ENCODE measurements at regions of chr21 and their contacts with region 1.

Region 1: GRCh38 chr21:25607151-25608043 is at the start of gene MRPL39:
- DNase-seq: peak; percentile 63 to 88 (median 80)
- ATAC-seq: peak; percentile 87 to 92 (median 90)
- H3K4me3 ChIP-seq: peak within 1 kb of the TSS; percentile 82 to 95
- H3K4me3 Mint-ChIP-seq: peak within 1 kb of the TSS; percentile 96 to 99 (median 99)
- H3K27ac ChIP-seq: peak within 1 kb of the TSS; percentile 63
- H3K27ac Mint-ChIP-seq: peak within 1 kb of the TSS; percentile 96 to 98
- H3K4me1 ChIP-seq: peaks cover 12 to 23% of the 10 kb centered on the region in 2 experiments
- H3K4me1 Mint-ChIP-seq: peaks cover 43 to 45% (median 43%) of the 10 kb centered on the region in 3 donors
- H3K27me3 ChIP-seq: no peaks in the 10 kb centered on the region
- H3K27me3 Mint-ChIP-seq: no peaks in the 10 kb centered on the region
- total RNA-seq, gene MRPL39: 10.6 to 18.2 (median 14.8) TPM

Region 2: GRCh38 chr21:25360593-25360992 is 246.8 kb before region 1 on chr21:
- CTCF ChIA-PET with region 1: no interaction called
- POLR2A ChIA-PET with region 1: no interaction called
- DNase-seq: no peak
- ATAC-seq: no peak
- H3K4me3 ChIP-seq: no peak overlapping the region
- H3K4me3 Mint-ChIP-seq: no peak overlapping the region
- H3K27ac ChIP-seq: no peak overlapping the region
- H3K27ac Mint-ChIP-seq: no peak overlapping the region
- H3K4me1 ChIP-seq: no peaks in the 10 kb centered on the region
- H3K4me1 Mint-ChIP-seq: no peaks in the 10 kb centered on the region
- H3K27me3 ChIP-seq: peaks cover 0 to 5% of the 10 kb centered on the region in 2 experiments
- H3K27me3 Mint-ChIP-seq: peaks cover 0 to 6% of the 10 kb centered on the region in 2 donors

Region 3: GRCh38 chr21:25563361-25564116 is 43.9 kb before region 1 on chr21:
- CTCF ChIA-PET with region 1: interaction called in 1 of 2 experiments, 4 read pairs
- POLR2A ChIA-PET with region 1: interaction called in 1 of 2 experiments, 15 read pairs
- DNase-seq: peak in 4 of 35 experiments; percentile 2 to 57 (median 18)
- ATAC-seq: peak; percentile 4 to 24 (median 11)
- H3K4me3 ChIP-seq: peak overlapping the region; percentile 7 to 62
- H3K4me3 Mint-ChIP-seq: peak overlapping the region; percentile 85 to 93 (median 91)
- H3K27ac ChIP-seq: peak overlapping the region; percentile 73
- H3K27ac Mint-ChIP-seq: peak overlapping the region; percentile 79 to 84
- H3K4me1 ChIP-seq: peaks cover 20 to 43% of the 10 kb centered on the region in 2 experiments
- H3K4me1 Mint-ChIP-seq: peaks cover 63 to 81% (median 71%) of the 10 kb centered on the region in 3 donors
- H3K27me3 ChIP-seq: no peaks in the 10 kb centered on the region
- H3K27me3 Mint-ChIP-seq: no peaks in the 10 kb centered on the region

Region 4: DNA sequence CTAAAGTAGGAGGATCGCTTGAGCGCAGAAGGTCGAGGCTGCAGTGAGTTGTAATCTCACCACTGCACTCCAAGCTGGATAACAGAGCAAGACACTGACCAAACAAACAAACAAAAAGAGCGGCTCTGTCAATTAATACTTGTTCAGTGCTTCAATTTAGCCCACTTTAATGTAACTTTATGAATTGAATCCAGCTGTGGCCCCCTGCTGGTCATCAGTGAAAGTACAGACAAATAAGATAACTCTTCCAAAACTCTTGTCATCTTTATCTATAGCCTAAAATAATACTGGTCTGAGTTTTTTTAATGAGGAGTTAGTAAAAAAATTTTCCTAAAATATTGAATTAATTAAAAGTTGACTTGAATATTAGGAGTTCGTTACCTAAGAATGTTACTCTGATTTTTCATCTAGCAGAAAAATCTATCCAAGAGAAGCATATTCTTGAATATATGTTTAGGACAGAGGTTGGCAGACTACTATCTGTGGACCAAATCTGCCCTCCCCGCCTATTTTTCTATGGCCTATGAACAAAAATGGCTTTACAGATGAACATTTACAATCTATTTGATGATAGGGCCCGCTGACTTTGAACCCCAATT is 101.2 kb after region 1 on chr21:
- CTCF ChIA-PET with region 1: interaction called, 10 to 21 read pairs
- POLR2A ChIA-PET with region 1: no interaction called
- DNase-seq: peak in 30 of 35 experiments; percentile 3 to 73 (median 32)
- ATAC-seq: peak in 2 of 4 experiments; percentile 19 to 38
- H3K4me3 ChIP-seq: no peak overlapping the region
- H3K4me3 Mint-ChIP-seq: no peak overlapping the region
- H3K27ac ChIP-seq: no peak overlapping the region
- H3K27ac Mint-ChIP-seq: no peak overlapping the region
- H3K4me1 ChIP-seq: no peaks in the 10 kb centered on the region
- H3K4me1 Mint-ChIP-seq: no peaks in the 10 kb centered on the region
- H3K27me3 ChIP-seq: no peaks in the 10 kb centered on the region
- H3K27me3 Mint-ChIP-seq: no peaks in the 10 kb centered on the region

Region 5: GRCh38 chr21:25734904-25735645 is 127.7 kb after region 1 on chr21 and contains the starts of genes ATP5PF and GABPA:
- CTCF ChIA-PET with region 1: interaction called, 7 to 12 read pairs
- POLR2A ChIA-PET with region 1: no interaction called
- DNase-seq: peak; percentile 93 to 99 (median 97)
- ATAC-seq: peak; percentile 87 to 91 (median 89)
- H3K4me3 ChIP-seq: peak within 1 kb of the TSS; percentile 61 to 97
- H3K4me3 Mint-ChIP-seq: peak within 1 kb of the TSS; percentile 93 to 100 (median 99)
- H3K27ac ChIP-seq: peak within 1 kb of the TSS; percentile 85
- H3K27ac Mint-ChIP-seq: peak within 1 kb of the TSS; percentile 100
- H3K4me1 ChIP-seq: peaks cover 21 to 24% of the 10 kb centered on the region in 2 experiments
- H3K4me1 Mint-ChIP-seq: peaks cover 62 to 73% (median 73%) of the 10 kb centered on the region in 3 donors
- H3K27me3 ChIP-seq: no peaks in the 10 kb centered on the region
- H3K27me3 Mint-ChIP-seq: no peaks in the 10 kb centered on the region
- total RNA-seq, gene ATP5PF: 35.1 to 52.2 (median 46.6) TPM
- total RNA-seq, gene GABPA: 23.5 to 28.3 (median 25.5) TPM